Naive thymus-derived CD4-positive, alpha-beta T cell (primary cell): ENCODE measurements at regions of chr10 and their contacts with region 1.

Region 1: GRCh38 chr10:52226197-52226847 is 87.8 kb upstream of the DKK1 start:
- DNase-seq: no peak
- ATAC-seq: no peak
- H3K4me3 ChIP-seq: no peak overlapping the region
- H3K4me3 Mint-ChIP-seq: no peak overlapping the region
- H3K27ac ChIP-seq: no peak overlapping the region
- H3K27ac Mint-ChIP-seq: no peak overlapping the region
- H3K4me1 ChIP-seq: no peaks in the 10 kb centered on the region
- H3K4me1 Mint-ChIP-seq: no peaks in the 10 kb centered on the region
- H3K27me3 ChIP-seq: no peaks in the 10 kb centered on the region
- H3K27me3 Mint-ChIP-seq: peaks cover 0 to 11% (median 3%) of the 10 kb centered on the region in 5 donors

Region 2: DNA sequence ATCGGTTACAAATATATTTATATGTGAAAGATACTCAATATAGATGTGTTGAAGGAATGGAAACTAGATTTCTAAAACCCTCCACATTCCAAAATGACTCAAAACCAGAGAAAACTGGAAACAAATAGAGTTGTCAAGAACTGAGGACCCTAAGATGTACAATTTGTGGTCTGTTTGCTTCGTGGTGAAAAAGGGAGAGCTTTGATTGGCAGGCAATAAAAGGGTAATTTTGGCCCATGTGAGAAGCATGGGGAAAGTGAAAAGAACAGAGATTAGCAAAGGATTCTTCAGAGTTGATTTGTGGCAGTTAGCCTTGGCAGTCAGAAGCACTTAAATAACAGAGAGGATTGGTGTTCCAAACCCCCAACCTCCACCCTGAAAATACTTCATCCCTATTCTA is 50.7 kb after region 1 on chr10:
- CTCF ChIA-PET with region 1: no interaction called
- POLR2A ChIA-PET with region 1: no interaction called
- intact Hi-C with region 1: loop called in 1 of 2 experiments (anchors 1 kb)
- DNase-seq: no peak
- ATAC-seq: no peak
- H3K4me3 ChIP-seq: no peak overlapping the region
- H3K4me3 Mint-ChIP-seq: no peak overlapping the region
- H3K27ac ChIP-seq: no peak overlapping the region
- H3K27ac Mint-ChIP-seq: no peak overlapping the region
- H3K4me1 ChIP-seq: no peaks in the 10 kb centered on the region
- H3K4me1 Mint-ChIP-seq: no peaks in the 10 kb centered on the region
- H3K27me3 ChIP-seq: no peaks in the 10 kb centered on the region
- H3K27me3 Mint-ChIP-seq: peaks cover 0 to 11% (median 0%) of the 10 kb centered on the region in 5 donors